ENCODE measurements at regions of chr2 and their contacts with region 1.

Region 1: DNA sequence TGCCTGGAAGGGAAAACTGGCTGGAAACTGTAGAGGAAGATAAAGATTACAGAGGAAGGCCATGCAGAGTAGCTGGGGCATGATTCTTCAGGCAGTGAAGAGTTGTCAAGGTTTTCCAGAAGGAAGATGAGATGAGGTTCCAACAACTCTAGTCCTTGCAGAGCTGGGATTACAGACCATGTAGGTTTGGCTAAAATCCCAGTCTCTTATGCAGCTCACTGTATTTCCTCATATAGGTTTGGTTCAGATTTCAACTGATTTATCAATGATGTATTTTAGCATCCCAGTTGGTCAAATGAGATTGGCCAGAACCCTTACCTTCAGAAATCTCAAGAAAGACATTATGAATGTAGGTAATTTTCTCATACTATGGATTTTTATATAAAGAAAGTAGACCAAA is 16.4 kb downstream of the FAP start:
- DNase-seq: no peak
- ATAC-seq: no peak
- H3K4me3 ChIP-seq: no peak overlapping the region
- H3K4me3 Mint-ChIP-seq: no peak overlapping the region
- H3K27ac ChIP-seq: no peak overlapping the region
- H3K27ac Mint-ChIP-seq: no peak overlapping the region
- H3K4me1 ChIP-seq: no peaks in the 10 kb centered on the region
- H3K4me1 Mint-ChIP-seq: no peaks in the 10 kb centered on the region
- H3K27me3 ChIP-seq: no peaks in the 10 kb centered on the region
- H3K27me3 Mint-ChIP-seq: peaks cover 11% of the 10 kb centered on the region
- CTCF ChIP-seq: no peak

Region 2: DNA sequence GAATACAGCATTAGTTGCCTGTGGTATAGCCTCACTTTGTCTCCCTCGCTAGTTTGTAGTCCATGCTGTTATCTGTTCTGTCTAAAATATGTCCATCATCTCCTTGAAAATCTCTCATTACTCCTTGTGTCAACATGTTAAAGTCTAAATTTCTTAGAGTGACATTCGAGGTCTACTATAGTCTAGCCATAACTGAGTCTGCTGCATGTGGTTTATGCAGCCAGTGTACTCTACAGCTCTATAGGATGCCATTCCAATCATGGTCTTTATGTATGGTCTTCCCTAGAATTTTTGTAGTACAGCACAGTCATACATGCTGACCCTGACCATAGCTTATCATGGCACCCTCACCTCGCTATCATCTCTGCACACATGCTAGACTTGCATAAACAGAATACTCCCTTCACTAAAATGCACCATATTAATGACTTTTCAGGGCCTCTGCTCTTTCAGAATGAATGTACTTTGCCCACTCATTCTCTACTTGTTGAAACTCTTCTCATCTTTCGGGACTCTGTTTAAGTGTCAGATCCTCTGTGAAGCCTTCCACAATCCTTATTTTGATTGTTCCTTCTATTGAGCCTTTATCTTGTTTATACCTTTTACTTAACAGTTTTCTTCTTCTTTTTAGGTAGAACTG is 1053.8 kb before region 1 on chr2:
- CTCF ChIA-PET with region 1: no interaction called
- POLR2A ChIA-PET with region 1: no interaction called
- intact Hi-C with region 1: no loop called
- DNase-seq: no peak
- ATAC-seq: no peak
- H3K4me3 ChIP-seq: no peak overlapping the region
- H3K4me3 Mint-ChIP-seq: no peak overlapping the region
- H3K27ac ChIP-seq: no peak overlapping the region
- H3K27ac Mint-ChIP-seq: no peak overlapping the region
- H3K4me1 ChIP-seq: no peaks in the 10 kb centered on the region
- H3K4me1 Mint-ChIP-seq: peaks cover 61% of the 10 kb centered on the region
- H3K27me3 ChIP-seq: no peaks in the 10 kb centered on the region
- H3K27me3 Mint-ChIP-seq: no peaks in the 10 kb centered on the region
- CTCF ChIP-seq: no peak

Region 3: GRCh38 chr2:162037028-162037795 is 189.6 kb before region 1 on chr2:
- CTCF ChIA-PET with region 1: no interaction called
- POLR2A ChIA-PET with region 1: no interaction called
- intact Hi-C with region 1: no loop called
- DNase-seq: no peak
- ATAC-seq: no peak
- H3K4me3 ChIP-seq: no peak overlapping the region
- H3K4me3 Mint-ChIP-seq: no peak overlapping the region
- H3K27ac ChIP-seq: no peak overlapping the region
- H3K27ac Mint-ChIP-seq: no peak overlapping the region
- H3K4me1 ChIP-seq: no peaks in the 10 kb centered on the region
- H3K4me1 Mint-ChIP-seq: no peaks in the 10 kb centered on the region
- H3K27me3 ChIP-seq: no peaks in the 10 kb centered on the region
- H3K27me3 Mint-ChIP-seq: no peaks in the 10 kb centered on the region
- CTCF ChIP-seq: no peak

Region 4: GRCh38 chr2:162266460-162266760 is 39.6 kb after region 1 on chr2:
- CTCF ChIA-PET with region 1: no interaction called
- POLR2A ChIA-PET with region 1: no interaction called
- intact Hi-C with region 1: loop called in 1 of 2 experiments (anchors 1 kb)
- DNase-seq: no peak
- ATAC-seq: no peak
- H3K4me3 ChIP-seq: no peak overlapping the region
- H3K4me3 Mint-ChIP-seq: no peak overlapping the region
- H3K27ac ChIP-seq: no peak overlapping the region
- H3K27ac Mint-ChIP-seq: no peak overlapping the region
- H3K4me1 ChIP-seq: peaks cover 6% of the 10 kb centered on the region
- H3K4me1 Mint-ChIP-seq: peaks cover 6% of the 10 kb centered on the region
- H3K27me3 ChIP-seq: no peaks in the 10 kb centered on the region
- H3K27me3 Mint-ChIP-seq: no peaks in the 10 kb centered on the region
- CTCF ChIP-seq: no peak